ENCODE measurements at regions of chr3 and their contacts with region 1.

Region 1: DNA sequence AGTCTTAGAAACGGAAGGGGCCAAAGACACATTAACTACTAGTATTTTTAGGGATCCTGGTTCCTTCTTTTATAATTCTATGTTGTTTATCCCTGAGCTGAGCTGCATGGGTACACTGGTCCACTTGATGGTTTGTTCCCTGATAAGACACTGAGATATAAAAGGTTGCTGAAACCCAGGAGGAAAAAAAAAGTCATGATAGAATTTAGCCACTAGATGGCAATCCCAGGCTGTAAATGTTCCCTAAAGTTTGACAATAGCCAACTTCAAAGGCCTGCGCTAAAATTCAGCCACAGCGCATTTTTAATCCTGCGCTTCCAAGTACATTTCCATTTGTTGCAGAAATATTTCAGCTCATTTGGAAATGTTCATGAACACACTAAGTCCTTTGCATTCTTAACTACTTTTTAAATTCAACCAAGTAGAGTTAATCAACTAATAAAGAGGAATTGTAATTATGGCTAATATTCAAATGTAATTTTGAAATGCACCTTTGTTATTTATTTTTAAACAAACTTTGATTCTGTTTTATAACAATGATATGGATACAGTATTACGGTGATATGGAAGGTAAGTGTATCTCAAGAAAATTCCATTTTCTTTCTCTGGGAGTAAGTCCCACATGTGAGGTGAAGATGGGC is 249.3 kb upstream of the FEZF2 start:
- DNase-seq: no peak
- H3K4me3 Mint-ChIP-seq: no peak overlapping the region
- H3K27ac Mint-ChIP-seq: no peak overlapping the region
- H3K4me1 Mint-ChIP-seq: no peaks in the 10 kb centered on the region
- H3K27me3 Mint-ChIP-seq: no peaks in the 10 kb centered on the region

Region 2: GRCh38 chr3:62046326-62046725 is 576.3 kb before region 1 on chr3:
- intact Hi-C with region 1: no loop called
- DNase-seq: no peak
- H3K4me3 Mint-ChIP-seq: no peak overlapping the region
- H3K27ac Mint-ChIP-seq: no peak overlapping the region
- H3K4me1 Mint-ChIP-seq: no peaks in the 10 kb centered on the region
- H3K27me3 Mint-ChIP-seq: no peaks in the 10 kb centered on the region

Region 3: DNA sequence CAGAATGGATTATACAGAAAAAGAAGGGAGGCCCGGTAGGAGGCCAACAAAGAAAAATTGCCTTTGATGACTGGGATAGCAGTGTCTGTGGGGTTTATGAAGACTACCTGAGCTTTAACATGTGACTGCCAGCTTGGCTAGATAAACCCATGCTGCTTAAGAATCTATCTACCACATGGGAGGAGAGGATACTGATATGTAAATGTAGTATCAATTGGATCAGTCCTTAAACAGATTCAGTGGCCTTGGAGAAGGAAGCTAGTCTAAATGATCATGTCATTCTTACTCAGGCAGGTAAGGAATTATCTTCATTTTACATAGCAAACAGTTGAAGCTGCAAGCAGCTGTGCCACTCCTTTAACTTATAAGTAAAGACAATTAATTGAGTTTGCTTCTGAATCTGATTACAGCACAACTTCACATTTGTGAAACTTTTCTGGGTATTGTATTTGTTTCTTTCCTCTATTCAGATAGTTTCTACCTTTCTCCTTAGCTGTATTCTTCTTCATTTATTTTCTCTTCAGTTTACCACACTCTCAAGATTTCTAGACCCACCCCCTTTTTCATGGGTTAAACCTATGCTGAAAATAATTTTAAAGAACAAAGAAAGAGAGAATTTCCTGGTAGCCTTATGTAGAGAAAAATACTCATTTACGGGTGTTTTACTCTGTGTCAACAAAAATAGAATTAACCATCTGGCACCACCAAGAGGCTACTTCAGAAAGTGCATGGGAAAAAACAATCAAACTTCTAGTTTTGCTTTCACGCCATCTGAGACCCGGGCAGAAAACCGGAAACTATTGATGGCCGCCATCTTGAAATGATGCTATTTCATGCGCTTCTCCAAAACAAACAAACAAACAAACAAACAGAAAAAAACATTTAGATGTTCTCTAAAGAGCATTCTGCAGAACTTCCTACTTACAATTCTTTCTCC is 605.7 kb after region 1 on chr3:
- intact Hi-C with region 1: loop called (anchors 10 kb)
- DNase-seq: no peak
- H3K4me3 Mint-ChIP-seq: no peak overlapping the region
- H3K27ac Mint-ChIP-seq: no peak overlapping the region
- H3K4me1 Mint-ChIP-seq: no peaks in the 10 kb centered on the region
- H3K27me3 Mint-ChIP-seq: no peaks in the 10 kb centered on the region

Region 4: DNA sequence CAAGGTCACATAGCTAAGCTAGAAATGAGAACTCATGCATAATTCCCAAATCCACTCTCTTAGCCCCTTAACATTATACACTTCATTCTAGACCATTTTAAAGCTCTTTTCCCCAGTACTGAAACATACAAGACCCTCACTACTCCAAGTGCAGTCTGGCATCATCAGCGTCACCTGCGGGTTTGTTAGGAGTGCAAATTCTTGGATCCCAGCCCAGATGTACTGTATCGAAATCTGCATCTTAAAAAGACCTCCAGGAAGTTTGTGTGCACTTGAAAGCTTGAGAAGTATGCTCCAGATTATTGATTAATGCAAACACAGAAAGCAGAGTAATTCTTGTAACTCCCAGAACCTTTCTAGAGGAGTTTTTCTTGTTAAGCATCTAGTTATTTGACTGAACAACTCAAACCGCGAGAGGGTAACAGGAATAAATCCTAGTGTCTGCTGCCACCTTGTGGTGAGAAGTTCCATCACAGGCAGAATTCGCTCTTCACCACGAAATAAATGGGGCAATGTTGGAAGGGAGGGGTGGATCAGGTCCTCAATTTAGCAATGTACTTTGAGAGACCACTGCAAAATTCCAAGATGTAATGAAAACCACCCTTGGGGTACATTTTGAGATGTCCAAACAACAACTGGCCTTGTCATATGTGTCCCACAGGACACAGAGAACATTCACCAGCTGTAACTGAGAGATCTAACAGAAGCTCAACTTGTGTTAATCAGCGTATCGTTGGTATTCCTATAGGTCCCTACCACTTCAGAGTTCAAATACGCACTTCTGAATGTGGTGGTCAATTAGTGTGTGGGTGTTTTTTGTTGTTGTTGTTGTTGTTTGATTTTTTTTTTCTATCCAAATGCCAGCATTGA is 1195.8 kb after region 1 on chr3:
- intact Hi-C with region 1: loop called (anchors 5 kb)
- DNase-seq: peak; percentile 23
- H3K4me3 Mint-ChIP-seq: no peak overlapping the region
- H3K27ac Mint-ChIP-seq: no peak overlapping the region
- H3K4me1 Mint-ChIP-seq: no peaks in the 10 kb centered on the region
- H3K27me3 Mint-ChIP-seq: no peaks in the 10 kb centered on the region

Measured in activated T-helper 2 cell treated with anti-CD3 and anti-CD28 coated beads, Interferon-gamma antibody, Interleukin-2, Interleukin-4, amounts not matched to agents 10 μg/mL and 5 μg/mL and 100 μg/mL, durations not matched to agents 14 hours and 24 hours and 36 hours (primary cell).